ENCODE measurements at regions of chr22 and their contacts with region 1.

Region 1: DNA sequence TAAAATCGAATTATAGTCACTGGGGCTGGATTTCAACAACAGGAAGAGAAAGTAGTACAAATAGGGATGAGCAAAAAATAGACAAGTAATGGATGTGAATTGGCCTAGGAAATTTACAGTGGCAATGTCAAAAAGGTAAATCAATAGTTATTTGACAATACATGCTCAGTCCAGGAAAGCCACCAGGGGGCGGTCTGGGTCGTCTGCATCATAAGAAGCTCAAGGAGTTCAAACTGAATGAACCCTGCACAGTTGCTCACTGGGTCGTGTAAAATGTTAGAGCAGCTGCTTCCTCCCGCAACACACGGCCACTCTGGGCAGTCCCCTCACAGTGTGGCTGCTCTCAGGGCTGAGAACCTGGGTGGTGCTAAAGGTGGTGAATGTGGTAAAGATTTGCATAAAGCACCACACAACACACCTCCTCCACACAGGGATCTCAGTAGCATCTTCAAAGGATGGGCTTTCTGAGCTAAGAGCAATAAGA is 85.9 kb downstream of the ZNF280B start:
- DNase-seq: peak; percentile 46
- H3K4me3 Mint-ChIP-seq: no peak overlapping the region
- H3K27ac Mint-ChIP-seq: no peak overlapping the region
- H3K4me1 Mint-ChIP-seq: no peaks in the 10 kb centered on the region
- H3K27me3 Mint-ChIP-seq: peaks cover 22% of the 10 kb centered on the region

Region 2: GRCh38 chr22:22207845-22208564 is 214.7 kb before region 1 on chr22:
- intact Hi-C with region 1: loop called (anchors 2 kb)
- DNase-seq: peak; percentile 75
- H3K4me3 Mint-ChIP-seq: no peak overlapping the region
- H3K27ac Mint-ChIP-seq: peak overlapping the region; percentile 84
- H3K4me1 Mint-ChIP-seq: peaks cover 41% of the 10 kb centered on the region
- H3K27me3 Mint-ChIP-seq: peaks cover 4% of the 10 kb centered on the region

Region 3: GRCh38 chr22:22357024-22357883 is 65.4 kb before region 1 on chr22:
- intact Hi-C with region 1: loop called (anchors 5 kb)
- DNase-seq: peak; percentile 69
- H3K4me3 Mint-ChIP-seq: no peak overlapping the region
- H3K27ac Mint-ChIP-seq: no peak overlapping the region
- H3K4me1 Mint-ChIP-seq: no peaks in the 10 kb centered on the region
- H3K27me3 Mint-ChIP-seq: peaks cover 29% of the 10 kb centered on the region

Region 4: GRCh38 chr22:22450343-22450839 is 27.7 kb after region 1 on chr22:
- intact Hi-C with region 1: no loop called
- DNase-seq: no peak
- H3K4me3 Mint-ChIP-seq: no peak overlapping the region
- H3K27ac Mint-ChIP-seq: no peak overlapping the region
- H3K4me1 Mint-ChIP-seq: no peaks in the 10 kb centered on the region
- H3K27me3 Mint-ChIP-seq: peaks cover 30% of the 10 kb centered on the region

Measured in activated T-helper 1 cell treated with anti-CD3 and anti-CD28 coated beads, Interleukin-12 subunit alpha, Interleukin-12 subunit beta, Interleukin-2, Interleukin-4 antibody, amounts not matched to agents 30 ng/mL and 10 ng/mL and 1 ng/mL, durations not matched to agents 14 hours and 24 hours and 36 hours (primary cell).